Sigmoid colon (tissue), 7 donors: ENCODE measurements at regions of chr19 and their contacts with region 1.

Region 1: GRCh38 chr19:49546825-49547565 is 19.2 kb downstream of the RCN3 start:
- DNase-seq: peak; percentile 88
- H3K4me3 ChIP-seq: no peak overlapping the region
- H3K27ac ChIP-seq: peak overlapping the region in 1 of 4 donors; percentile 35
- H3K4me1 ChIP-seq: peaks cover 0 to 5% (median 2%) of the 10 kb centered on the region in 4 donors
- H3K27me3 ChIP-seq: no peaks in the 10 kb centered on the region
- CTCF ChIP-seq: peak; percentile 74 to 94 (median 88)
- EP300 ChIP-seq: no peak
- POLR2A ChIP-seq: no peak

Region 2: GRCh38 chr19:49391581-49392399 is 155.2 kb before region 1 on chr19:
- intact Hi-C with region 1: loop called (anchors 2 kb)
- DNase-seq: peak; percentile 88
- H3K4me3 ChIP-seq: no peak overlapping the region
- H3K27ac ChIP-seq: no peak overlapping the region
- H3K4me1 ChIP-seq: peaks cover 0 to 3% (median 0%) of the 10 kb centered on the region in 4 donors
- H3K27me3 ChIP-seq: peaks cover 6 to 52% (median 14%) of the 10 kb centered on the region in 3 donors
- CTCF ChIP-seq: peak; percentile 61 to 77 (median 68)
- EP300 ChIP-seq: no peak
- POLR2A ChIP-seq: no peak

Region 3: DNA sequence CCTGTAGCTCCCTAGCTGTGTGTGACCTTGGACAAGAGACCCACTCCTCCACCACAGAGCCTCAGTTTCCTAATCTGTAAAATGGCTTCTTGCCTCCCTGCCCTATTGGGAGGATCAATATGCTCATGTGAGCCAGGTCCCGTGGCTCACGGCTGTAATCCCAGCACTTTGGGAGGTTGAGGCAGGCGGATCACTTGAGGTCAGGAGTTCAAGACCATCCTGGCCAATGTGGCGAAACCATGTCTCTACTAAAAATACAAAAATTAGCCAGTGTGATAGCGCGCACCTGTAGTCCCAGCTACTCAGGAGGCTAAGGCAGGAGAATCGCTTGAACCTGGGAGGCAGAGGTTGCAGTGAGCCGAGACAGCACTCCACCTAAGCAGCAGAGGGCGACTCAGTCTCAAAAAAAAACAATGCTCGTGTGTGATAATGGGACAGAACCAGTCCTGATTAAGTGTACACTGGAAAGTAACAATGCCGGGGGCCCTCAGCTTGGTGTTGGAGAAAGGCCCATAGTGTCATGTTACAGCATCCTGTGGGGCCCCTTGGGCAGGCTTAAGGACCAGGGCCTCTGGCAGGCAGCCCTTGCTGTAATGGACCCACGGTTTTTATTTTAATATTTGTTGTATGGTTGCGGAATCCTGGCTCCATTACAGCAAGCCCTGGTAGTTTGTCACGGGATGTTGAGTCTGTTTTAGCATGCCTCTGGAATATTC is 44.0 kb before region 1 on chr19:
- intact Hi-C with region 1: loop called (anchors 1 kb)
- DNase-seq: no peak
- H3K4me3 ChIP-seq: no peak overlapping the region
- H3K27ac ChIP-seq: no peak overlapping the region
- H3K4me1 ChIP-seq: peaks cover 0 to 23% (median 14%) of the 10 kb centered on the region in 4 donors
- H3K27me3 ChIP-seq: no peaks in the 10 kb centered on the region
- CTCF ChIP-seq: peak in 3 of 4 experiments; percentile 60 to 68 (median 64)
- EP300 ChIP-seq: no peak
- POLR2A ChIP-seq: no peak